Astrocyte of the cerebellum (primary cell): ENCODE measurements at regions of chr6 and their contacts with region 1.

Region 1: DNA sequence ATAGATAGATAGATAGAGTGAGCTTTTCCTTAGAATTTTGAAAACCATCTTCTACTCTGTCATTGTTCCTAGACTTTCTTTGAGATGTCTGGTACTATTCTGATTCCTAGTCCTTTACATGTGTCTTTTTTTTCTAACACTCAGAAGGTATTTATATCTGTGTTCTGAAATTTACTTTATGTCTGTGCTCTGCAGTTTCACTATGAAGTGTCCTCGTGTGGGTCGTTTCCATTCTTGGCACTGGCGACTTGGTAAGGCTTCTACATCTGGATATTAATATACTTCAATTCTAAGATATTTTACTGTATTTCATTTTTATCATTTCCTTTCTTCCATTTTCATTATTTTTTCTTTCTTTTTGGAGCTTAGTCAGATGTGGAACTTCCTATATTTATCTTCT is 87.0 kb downstream of the FHL5 start:
- DNase-seq: no peak
- H3K4me3 ChIP-seq: no peak overlapping the region
- CTCF ChIP-seq: no peak

Region 2: DNA sequence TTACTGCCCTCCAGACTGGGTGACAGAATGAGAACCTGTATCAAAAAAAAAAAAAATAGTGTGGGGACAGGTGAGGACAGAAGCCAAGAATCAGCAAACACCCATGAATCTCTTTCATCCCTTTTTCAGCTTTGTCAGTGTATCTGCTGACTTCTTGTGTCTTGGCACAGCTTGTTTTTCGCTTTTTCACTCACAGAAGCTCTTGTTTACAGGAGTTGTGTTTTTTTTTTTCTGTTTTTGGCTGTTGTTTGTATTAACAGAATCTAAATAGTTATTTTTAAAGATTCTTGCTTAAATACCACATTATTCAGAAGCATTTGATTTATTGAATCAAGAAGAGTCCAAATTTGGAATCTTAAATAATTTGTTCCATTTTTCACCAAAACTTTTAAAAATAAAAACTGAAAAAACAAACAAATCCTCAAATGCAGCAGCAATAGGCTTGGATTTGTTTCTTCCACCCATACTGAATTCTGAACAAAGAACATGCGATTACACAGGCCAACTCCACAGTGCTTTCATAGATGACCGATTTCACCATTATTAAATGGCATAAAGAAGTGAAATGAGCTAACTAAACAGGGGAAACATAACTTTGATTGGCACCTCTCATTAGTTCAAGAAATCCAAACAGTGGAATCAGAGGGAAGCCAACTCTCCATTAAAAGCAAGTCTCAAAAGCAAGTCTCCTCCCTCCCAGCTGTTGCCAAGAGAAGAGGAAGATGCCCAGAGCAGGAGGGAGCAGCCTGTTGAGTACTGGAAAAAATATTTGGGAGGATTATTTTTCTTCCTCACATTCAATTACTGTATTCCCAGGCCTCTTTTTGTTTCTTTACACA is 214.5 kb after region 1 on chr6:
- in situ Hi-C with region 1: loop called (anchors 25 kb)
- DNase-seq: no peak
- H3K4me3 ChIP-seq: no peak overlapping the region
- CTCF ChIP-seq: no peak

Region 3: GRCh38 chr6:97000138-97000537 is 350.2 kb after region 1 on chr6:
- in situ Hi-C with region 1: no loop called
- DNase-seq: no peak
- H3K4me3 ChIP-seq: no peak overlapping the region
- CTCF ChIP-seq: no peak